Activated T-helper 2 cell treated with anti-CD3 and anti-CD28 coated beads, Interferon-gamma antibody, Interleukin-2, Interleukin-4, amounts not matched to agents 10 μg/mL and 5 μg/mL and 100 μg/mL, durations not matched to agents 14 hours and 24 hours and 36 hours (primary cell): ENCODE measurements at regions of chr9 and their contacts with region 1.

Region 1: GRCh38 chr9:21239911-21240310 is at the start of gene IFNA14:
- DNase-seq: no peak
- H3K4me3 Mint-ChIP-seq: no peak within 1 kb of the TSS
- H3K27ac Mint-ChIP-seq: no peak within 1 kb of the TSS
- H3K4me1 Mint-ChIP-seq: peaks cover 6% of the 10 kb centered on the region
- H3K27me3 Mint-ChIP-seq: peaks cover 38% of the 10 kb centered on the region
- total RNA-seq, gene IFNA14: not detected in 2 replicates

Region 2: GRCh38 chr9:21455320-21455719 is 215.4 kb after region 1 on chr9:
- intact Hi-C with region 1: loop called (anchors 10 kb)
- DNase-seq: no peak
- H3K4me3 Mint-ChIP-seq: no peak overlapping the region
- H3K27ac Mint-ChIP-seq: no peak overlapping the region
- H3K4me1 Mint-ChIP-seq: no peaks in the 10 kb centered on the region
- H3K27me3 Mint-ChIP-seq: peaks cover 29% of the 10 kb centered on the region